CD4-positive, alpha-beta T cell (primary cell): ENCODE measurements at regions of chr6 and their contacts with region 1.

Region 1: GRCh38 chr6:24581084-24581669 is 64.8 kb downstream of the KIAA0319 start:
- DNase-seq: peak; percentile 64 to 86 (median 72)
- ATAC-seq: peak; percentile 91
- H3K4me3 ChIP-seq: no peak overlapping the region
- H3K4me3 Mint-ChIP-seq: no peak overlapping the region
- H3K27ac ChIP-seq: no peak overlapping the region
- H3K27ac Mint-ChIP-seq: no peak overlapping the region
- H3K4me1 ChIP-seq: no peaks in the 10 kb centered on the region
- H3K4me1 Mint-ChIP-seq: peaks cover 5% of the 10 kb centered on the region
- H3K27me3 ChIP-seq: no peaks in the 10 kb centered on the region
- H3K27me3 Mint-ChIP-seq: peaks cover 4% of the 10 kb centered on the region
- CTCF ChIP-seq: peak; percentile 80

Region 2: GRCh38 chr6:24520929-24521546 is 60.1 kb before region 1 on chr6:
- CTCF ChIA-PET with region 1: no interaction called
- POLR2A ChIA-PET with region 1: no interaction called
- intact Hi-C with region 1: loop called in 1 of 2 experiments (anchors 2 kb)
- DNase-seq: peak in 11 of 14 experiments; percentile 7 to 54 (median 33)
- ATAC-seq: peak; percentile 43
- H3K4me3 ChIP-seq: no peak overlapping the region
- H3K4me3 Mint-ChIP-seq: no peak overlapping the region
- H3K27ac ChIP-seq: no peak overlapping the region
- H3K27ac Mint-ChIP-seq: no peak overlapping the region
- H3K4me1 ChIP-seq: no peaks in the 10 kb centered on the region
- H3K4me1 Mint-ChIP-seq: no peaks in the 10 kb centered on the region
- H3K27me3 ChIP-seq: no peaks in the 10 kb centered on the region
- H3K27me3 Mint-ChIP-seq: no peaks in the 10 kb centered on the region
- CTCF ChIP-seq: peak; percentile 59

Region 3: GRCh38 chr6:24621626-24622289 is 40.6 kb after region 1 on chr6:
- CTCF ChIA-PET with region 1: no interaction called
- POLR2A ChIA-PET with region 1: no interaction called
- intact Hi-C with region 1: no loop called
- DNase-seq: no peak
- ATAC-seq: no peak
- H3K4me3 ChIP-seq: no peak overlapping the region
- H3K4me3 Mint-ChIP-seq: no peak overlapping the region
- H3K27ac ChIP-seq: no peak overlapping the region
- H3K27ac Mint-ChIP-seq: no peak overlapping the region
- H3K4me1 ChIP-seq: no peaks in the 10 kb centered on the region
- H3K4me1 Mint-ChIP-seq: no peaks in the 10 kb centered on the region
- H3K27me3 ChIP-seq: no peaks in the 10 kb centered on the region
- H3K27me3 Mint-ChIP-seq: no peaks in the 10 kb centered on the region
- CTCF ChIP-seq: no peak

Region 4: DNA sequence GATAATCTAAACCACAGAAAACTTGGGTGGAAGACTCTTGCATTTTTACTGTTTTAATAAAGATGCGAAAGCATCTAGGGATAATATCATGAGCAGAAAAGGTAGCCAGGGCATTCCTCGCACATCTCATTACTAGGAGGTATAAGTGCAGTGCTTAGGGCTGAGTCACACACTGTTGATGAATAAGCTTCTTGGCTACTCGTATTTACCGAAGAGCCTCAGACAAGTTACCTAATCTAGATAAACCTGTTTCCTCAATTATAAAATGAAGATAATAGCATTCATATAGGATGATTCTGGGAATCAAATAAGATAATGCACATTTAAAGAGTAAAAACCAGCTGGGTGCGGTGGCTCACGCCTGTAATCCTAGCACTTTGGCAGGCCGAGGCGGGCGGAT is 65.6 kb after region 1 on chr6:
- CTCF ChIA-PET with region 1: interaction called, 19 read pairs
- POLR2A ChIA-PET with region 1: no interaction called
- intact Hi-C with region 1: no loop called
- DNase-seq: no peak
- ATAC-seq: no peak
- H3K4me3 ChIP-seq: no peak overlapping the region
- H3K4me3 Mint-ChIP-seq: peak overlapping the region; percentile 87
- H3K27ac ChIP-seq: no peak overlapping the region
- H3K27ac Mint-ChIP-seq: peak overlapping the region; percentile 68
- H3K4me1 ChIP-seq: peaks cover 11% of the 10 kb centered on the region
- H3K4me1 Mint-ChIP-seq: peaks cover 17% of the 10 kb centered on the region
- H3K27me3 ChIP-seq: peaks cover 6% of the 10 kb centered on the region in 2 experiments
- H3K27me3 Mint-ChIP-seq: peaks cover 17% of the 10 kb centered on the region
- CTCF ChIP-seq: no peak

Region 5: DNA sequence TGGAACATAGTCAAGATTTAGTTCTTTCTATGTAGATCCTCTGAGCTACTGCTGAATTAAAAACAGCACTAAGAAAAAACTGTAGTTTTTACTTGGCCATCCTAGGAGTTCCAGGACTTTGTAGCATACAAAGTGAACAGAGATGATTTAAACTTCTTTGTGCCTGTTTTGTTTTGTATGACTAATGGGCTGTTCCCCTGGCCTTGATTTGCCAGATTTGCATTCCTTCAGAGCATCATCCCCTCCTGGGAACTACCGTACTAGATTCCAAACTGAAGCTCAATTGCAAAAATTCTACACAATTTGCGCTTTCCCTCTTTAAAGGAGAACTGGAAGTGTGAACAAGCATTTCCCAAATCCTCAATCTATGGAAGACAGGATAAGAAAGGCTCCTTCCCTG is 108.8 kb after region 1 on chr6:
- CTCF ChIA-PET with region 1: interaction called, 11 read pairs
- POLR2A ChIA-PET with region 1: interaction called, 5 read pairs
- intact Hi-C with region 1: loop called (anchors 1 kb)
- DNase-seq: no peak
- ATAC-seq: no peak
- H3K4me3 ChIP-seq: no peak overlapping the region
- H3K4me3 Mint-ChIP-seq: no peak overlapping the region
- H3K27ac ChIP-seq: no peak overlapping the region
- H3K27ac Mint-ChIP-seq: no peak overlapping the region
- H3K4me1 ChIP-seq: no peaks in the 10 kb centered on the region
- H3K4me1 Mint-ChIP-seq: peaks cover 15% of the 10 kb centered on the region
- H3K27me3 ChIP-seq: no peaks in the 10 kb centered on the region
- H3K27me3 Mint-ChIP-seq: no peaks in the 10 kb centered on the region
- CTCF ChIP-seq: no peak

Region 6: GRCh38 chr6:24766680-24767462 is 185.7 kb after region 1 on chr6:
- CTCF ChIA-PET with region 1: interaction called, 4 read pairs
- POLR2A ChIA-PET with region 1: no interaction called
- intact Hi-C with region 1: loop called (anchors 1 kb)
- DNase-seq: peak in 3 of 14 experiments; percentile 43 to 58 (median 55)
- ATAC-seq: peak; percentile 83
- H3K4me3 ChIP-seq: no peak overlapping the region
- H3K4me3 Mint-ChIP-seq: no peak overlapping the region
- H3K27ac ChIP-seq: no peak overlapping the region
- H3K27ac Mint-ChIP-seq: no peak overlapping the region
- H3K4me1 ChIP-seq: no peaks in the 10 kb centered on the region
- H3K4me1 Mint-ChIP-seq: no peaks in the 10 kb centered on the region
- H3K27me3 ChIP-seq: no peaks in the 10 kb centered on the region
- H3K27me3 Mint-ChIP-seq: no peaks in the 10 kb centered on the region
- CTCF ChIP-seq: peak; percentile 69

Region 7: GRCh38 chr6:24824142-24824938 is 243.2 kb after region 1 on chr6:
- CTCF ChIA-PET with region 1: no interaction called
- POLR2A ChIA-PET with region 1: no interaction called
- intact Hi-C with region 1: no loop called
- DNase-seq: no peak
- ATAC-seq: no peak
- H3K4me3 ChIP-seq: no peak overlapping the region
- H3K4me3 Mint-ChIP-seq: no peak overlapping the region
- H3K27ac ChIP-seq: no peak overlapping the region
- H3K27ac Mint-ChIP-seq: peak overlapping the region; percentile 77
- H3K4me1 ChIP-seq: peaks cover 9% of the 10 kb centered on the region
- H3K4me1 Mint-ChIP-seq: peaks cover 14% of the 10 kb centered on the region
- H3K27me3 ChIP-seq: no peaks in the 10 kb centered on the region
- H3K27me3 Mint-ChIP-seq: no peaks in the 10 kb centered on the region
- CTCF ChIP-seq: no peak